ENCODE measurements at regions of chr12 and their contacts with region 1.

Region 1: GRCh38 chr12:121579981-121580868 is 598 bp downstream of the KDM2B start:
- DNase-seq: peak; percentile 59 to 88 (median 77)
- ATAC-seq: peak; percentile 65 to 73 (median 71)
- H3K4me3 ChIP-seq: peak overlapping the region; percentile 73 to 75
- H3K4me3 Mint-ChIP-seq: peak overlapping the region; percentile 96 to 98 (median 96)
- H3K27ac ChIP-seq: peak overlapping the region; percentile 89
- H3K27ac Mint-ChIP-seq: peak overlapping the region; percentile 98 to 99
- H3K4me1 ChIP-seq: peaks cover 17 to 52% of the 10 kb centered on the region in 2 experiments
- H3K4me1 Mint-ChIP-seq: peaks cover 42 to 52% (median 50%) of the 10 kb centered on the region in 3 donors
- H3K27me3 ChIP-seq: no peaks in the 10 kb centered on the region
- H3K27me3 Mint-ChIP-seq: no peaks in the 10 kb centered on the region

Region 2: GRCh38 chr12:121196902-121197301 is 383.3 kb before region 1 on chr12:
- CTCF ChIA-PET with region 1: no interaction called
- POLR2A ChIA-PET with region 1: interaction called in 1 of 2 experiments, 10 read pairs
- DNase-seq: peak in 2 of 35 experiments; percentile 2 to 38
- ATAC-seq: peak in 2 of 4 experiments; percentile 67
- H3K4me3 ChIP-seq: no peak overlapping the region
- H3K4me3 Mint-ChIP-seq: peak overlapping the region in 1 of 3 donors; percentile 53
- H3K27ac ChIP-seq: no peak overlapping the region
- H3K27ac Mint-ChIP-seq: peak overlapping the region in 1 of 2 donors; percentile 19
- H3K4me1 ChIP-seq: peaks cover 0 to 6% of the 10 kb centered on the region in 2 experiments
- H3K4me1 Mint-ChIP-seq: peaks cover 0 to 12% (median 12%) of the 10 kb centered on the region in 3 donors
- H3K27me3 ChIP-seq: no peaks in the 10 kb centered on the region
- H3K27me3 Mint-ChIP-seq: no peaks in the 10 kb centered on the region

Region 3: DNA sequence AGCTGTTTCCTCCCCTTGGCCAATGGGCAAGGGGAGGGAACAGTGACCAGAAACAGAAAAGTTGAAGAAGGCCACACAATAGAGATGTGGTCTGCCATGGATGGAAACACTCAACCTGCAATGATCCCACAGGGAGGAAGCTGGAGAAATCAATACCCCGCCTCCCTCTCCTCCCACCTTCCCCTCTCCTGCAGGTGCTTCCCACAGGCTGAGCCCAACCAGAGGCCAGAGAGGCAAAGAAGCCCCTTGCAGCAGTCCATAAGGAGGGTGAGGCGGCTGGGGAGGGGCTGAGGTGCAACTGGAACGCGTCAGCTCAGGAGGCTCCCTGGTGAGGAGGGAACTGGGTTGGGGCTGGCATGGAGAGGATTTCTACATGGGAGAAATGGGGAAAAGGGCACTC is 96.3 kb before region 1 on chr12:
- CTCF ChIA-PET with region 1: no interaction called
- POLR2A ChIA-PET with region 1: no interaction called
- DNase-seq: no peak
- ATAC-seq: no peak
- H3K4me3 ChIP-seq: no peak overlapping the region
- H3K4me3 Mint-ChIP-seq: no peak overlapping the region
- H3K27ac ChIP-seq: no peak overlapping the region
- H3K27ac Mint-ChIP-seq: no peak overlapping the region
- H3K4me1 ChIP-seq: no peaks in the 10 kb centered on the region
- H3K4me1 Mint-ChIP-seq: peaks cover 0 to 5% (median 4%) of the 10 kb centered on the region in 3 donors
- H3K27me3 ChIP-seq: no peaks in the 10 kb centered on the region
- H3K27me3 Mint-ChIP-seq: no peaks in the 10 kb centered on the region

Region 4: GRCh38 chr12:121530600-121531355 is 49.4 kb before region 1 on chr12:
- CTCF ChIA-PET with region 1: no interaction called
- POLR2A ChIA-PET with region 1: interaction called in 1 of 2 experiments, 11 read pairs
- DNase-seq: peak; percentile 47 to 86 (median 76)
- ATAC-seq: peak; percentile 62 to 85 (median 84)
- H3K4me3 ChIP-seq: no peak overlapping the region
- H3K4me3 Mint-ChIP-seq: peak overlapping the region; percentile 13 to 59 (median 35)
- H3K27ac ChIP-seq: peak overlapping the region; percentile 69
- H3K27ac Mint-ChIP-seq: peak overlapping the region; percentile 91 to 95
- H3K4me1 ChIP-seq: peaks cover 7 to 47% of the 10 kb centered on the region in 2 experiments
- H3K4me1 Mint-ChIP-seq: peaks cover 41 to 53% (median 51%) of the 10 kb centered on the region in 3 donors
- H3K27me3 ChIP-seq: no peaks in the 10 kb centered on the region
- H3K27me3 Mint-ChIP-seq: no peaks in the 10 kb centered on the region

Region 5: GRCh38 chr12:121590476-121591143 is 10.4 kb after region 1 on chr12:
- CTCF ChIA-PET with region 1: interaction called in 1 of 2 experiments, 6 read pairs
- POLR2A ChIA-PET with region 1: interaction called, 6 to 10 read pairs
- DNase-seq: peak; percentile 30 to 86 (median 60)
- ATAC-seq: peak; percentile 75 to 83 (median 80)
- H3K4me3 ChIP-seq: peak overlapping the region; percentile 60 to 69
- H3K4me3 Mint-ChIP-seq: peak overlapping the region; percentile 77 to 84 (median 79)
- H3K27ac ChIP-seq: peak overlapping the region; percentile 100
- H3K27ac Mint-ChIP-seq: peak overlapping the region; percentile 97 to 98
- H3K4me1 ChIP-seq: peaks cover 9 to 46% of the 10 kb centered on the region in 2 experiments
- H3K4me1 Mint-ChIP-seq: peaks cover 38 to 45% (median 40%) of the 10 kb centered on the region in 3 donors
- H3K27me3 ChIP-seq: no peaks in the 10 kb centered on the region
- H3K27me3 Mint-ChIP-seq: no peaks in the 10 kb centered on the region

Region 6: DNA sequence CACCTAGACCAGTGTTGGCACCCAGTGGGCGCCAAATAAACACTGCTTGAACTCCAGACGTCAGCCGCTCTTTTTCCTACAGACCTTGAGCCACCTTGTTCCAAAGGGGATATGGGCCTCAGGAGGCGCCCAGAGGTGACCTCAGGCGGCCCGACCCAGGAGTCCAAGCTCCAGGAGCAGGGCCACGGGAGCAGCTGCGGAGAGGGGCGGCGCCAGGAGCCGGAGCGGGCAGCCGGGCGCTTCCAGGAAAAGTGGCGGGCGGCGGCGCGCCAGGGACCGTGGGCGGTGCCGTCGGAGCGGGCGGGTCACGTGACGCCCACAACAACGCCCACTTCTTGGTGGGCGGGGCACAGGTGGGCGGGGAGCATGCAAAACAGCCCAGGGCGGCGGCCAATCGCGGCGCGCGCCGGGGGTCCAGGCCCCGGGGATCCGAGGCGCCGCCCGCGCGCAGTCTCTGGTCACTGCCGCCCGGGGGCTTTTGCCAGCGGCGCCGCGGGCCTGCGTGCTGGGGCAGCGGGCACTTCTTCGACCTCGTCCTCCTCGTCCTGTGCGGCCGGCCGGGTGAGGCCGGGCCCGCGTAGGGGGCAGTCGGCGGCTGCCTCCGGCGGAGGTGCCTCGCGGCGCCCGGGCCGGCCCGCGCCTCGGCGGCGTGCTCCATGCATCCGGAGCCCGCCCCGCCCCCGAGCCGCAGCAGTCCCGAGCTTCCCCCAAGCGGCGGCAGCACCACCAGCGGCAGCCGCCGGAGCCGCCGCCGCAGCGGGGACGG is 46.0 kb after region 1 on chr12 and contains the start of gene ORAI1:
- CTCF ChIA-PET with region 1: interaction called, 10 to 22 read pairs
- POLR2A ChIA-PET with region 1: interaction called in 1 of 2 experiments, 18 read pairs
- DNase-seq: peak; percentile 84 to 98 (median 93)
- ATAC-seq: peak; percentile 77 to 87 (median 80)
- H3K4me3 ChIP-seq: peak within 1 kb of the TSS; percentile 85 to 96
- H3K4me3 Mint-ChIP-seq: peak within 1 kb of the TSS; percentile 93 to 95 (median 93)
- H3K27ac ChIP-seq: peak within 1 kb of the TSS; percentile 89
- H3K27ac Mint-ChIP-seq: peak within 1 kb of the TSS; percentile 96 to 97
- H3K4me1 ChIP-seq: peaks cover 25 to 52% of the 10 kb centered on the region in 2 experiments
- H3K4me1 Mint-ChIP-seq: peaks cover 44 to 51% (median 45%) of the 10 kb centered on the region in 3 donors
- H3K27me3 ChIP-seq: no peaks in the 10 kb centered on the region
- H3K27me3 Mint-ChIP-seq: no peaks in the 10 kb centered on the region
- total RNA-seq, gene ORAI1: 38.9 to 76.5 (median 59.0) TPM

Region 7: DNA sequence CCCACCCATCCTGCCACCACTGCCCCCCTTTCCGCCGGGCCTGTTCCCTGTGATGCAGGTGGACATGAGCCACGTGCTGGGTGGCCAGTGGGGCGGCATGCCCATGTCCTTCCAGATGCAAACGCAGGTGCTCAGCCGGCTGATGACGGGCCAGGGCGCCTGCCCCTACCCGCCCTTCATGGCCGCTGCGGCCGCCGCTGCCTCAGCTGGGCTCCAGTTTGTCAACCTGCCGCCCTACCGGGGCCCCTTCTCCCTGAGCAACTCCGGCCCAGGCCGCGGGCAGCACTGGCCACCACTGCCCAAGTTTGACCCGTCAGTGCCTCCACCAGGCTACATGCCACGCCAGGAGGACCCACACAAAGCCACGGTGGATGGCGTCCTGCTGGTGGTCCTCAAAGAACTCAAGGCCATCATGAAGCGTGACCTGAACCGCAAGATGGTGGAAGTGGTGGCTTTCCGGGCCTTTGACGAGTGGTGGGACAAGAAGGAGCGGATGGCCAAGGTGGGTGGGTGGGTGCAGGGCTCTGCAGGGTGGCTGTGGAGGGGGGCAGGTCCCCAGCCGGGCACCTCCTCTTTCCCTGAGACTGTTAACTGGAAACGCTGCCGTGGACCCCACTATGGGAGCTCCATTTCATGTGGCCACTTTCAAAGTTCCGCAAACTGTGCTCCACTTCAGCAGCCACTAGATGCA is 234.3 kb after region 1 on chr12:
- CTCF ChIA-PET with region 1: no interaction called
- POLR2A ChIA-PET with region 1: no interaction called
- DNase-seq: no peak
- ATAC-seq: no peak
- H3K4me3 ChIP-seq: no peak overlapping the region
- H3K4me3 Mint-ChIP-seq: no peak overlapping the region
- H3K27ac ChIP-seq: no peak overlapping the region
- H3K27ac Mint-ChIP-seq: no peak overlapping the region
- H3K4me1 ChIP-seq: peaks cover 15 to 49% of the 10 kb centered on the region in 2 experiments
- H3K4me1 Mint-ChIP-seq: peaks cover 39 to 47% (median 41%) of the 10 kb centered on the region in 3 donors
- H3K27me3 ChIP-seq: no peaks in the 10 kb centered on the region
- H3K27me3 Mint-ChIP-seq: no peaks in the 10 kb centered on the region